MCF 10A (cell line): ENCODE measurements at regions of chr2 and their contacts with region 1.

Region 1: DNA sequence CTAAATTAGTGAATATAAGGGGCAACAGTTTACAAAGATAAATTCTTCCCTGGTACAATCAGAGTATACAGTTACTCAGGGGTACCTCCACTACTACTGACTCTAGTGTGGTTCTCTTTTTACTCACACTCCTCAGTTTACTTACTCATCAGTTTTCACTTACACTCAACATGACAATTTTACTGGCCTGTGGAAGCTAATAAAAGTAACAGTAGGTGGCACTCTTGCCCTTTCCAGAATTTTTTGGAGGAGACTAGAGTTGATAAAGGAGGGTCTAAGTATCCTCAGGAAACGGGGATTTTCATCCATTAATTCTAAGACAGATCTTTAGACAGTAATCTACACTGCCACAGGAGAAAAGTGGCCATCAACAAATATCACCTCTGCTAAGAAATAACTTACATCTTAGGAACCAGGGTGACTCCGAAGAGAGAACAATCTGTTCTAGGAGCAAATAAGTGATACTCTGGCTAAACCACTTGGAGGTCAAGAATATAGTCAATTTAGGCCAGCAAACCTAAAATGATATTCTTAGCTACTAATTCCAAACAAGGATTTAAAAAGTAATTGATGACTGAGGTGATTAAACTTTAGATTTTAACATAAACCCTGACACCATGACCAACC is 61.3 kb downstream of the ATL2 start:
- DNase-seq: peak; percentile 63
- H3K4me3 Mint-ChIP-seq: no peak overlapping the region
- H3K27ac Mint-ChIP-seq: no peak overlapping the region
- H3K4me1 Mint-ChIP-seq: no peaks in the 10 kb centered on the region
- H3K27me3 Mint-ChIP-seq: no peaks in the 10 kb centered on the region
- CTCF ChIP-seq: peak; percentile 75

Region 2: DNA sequence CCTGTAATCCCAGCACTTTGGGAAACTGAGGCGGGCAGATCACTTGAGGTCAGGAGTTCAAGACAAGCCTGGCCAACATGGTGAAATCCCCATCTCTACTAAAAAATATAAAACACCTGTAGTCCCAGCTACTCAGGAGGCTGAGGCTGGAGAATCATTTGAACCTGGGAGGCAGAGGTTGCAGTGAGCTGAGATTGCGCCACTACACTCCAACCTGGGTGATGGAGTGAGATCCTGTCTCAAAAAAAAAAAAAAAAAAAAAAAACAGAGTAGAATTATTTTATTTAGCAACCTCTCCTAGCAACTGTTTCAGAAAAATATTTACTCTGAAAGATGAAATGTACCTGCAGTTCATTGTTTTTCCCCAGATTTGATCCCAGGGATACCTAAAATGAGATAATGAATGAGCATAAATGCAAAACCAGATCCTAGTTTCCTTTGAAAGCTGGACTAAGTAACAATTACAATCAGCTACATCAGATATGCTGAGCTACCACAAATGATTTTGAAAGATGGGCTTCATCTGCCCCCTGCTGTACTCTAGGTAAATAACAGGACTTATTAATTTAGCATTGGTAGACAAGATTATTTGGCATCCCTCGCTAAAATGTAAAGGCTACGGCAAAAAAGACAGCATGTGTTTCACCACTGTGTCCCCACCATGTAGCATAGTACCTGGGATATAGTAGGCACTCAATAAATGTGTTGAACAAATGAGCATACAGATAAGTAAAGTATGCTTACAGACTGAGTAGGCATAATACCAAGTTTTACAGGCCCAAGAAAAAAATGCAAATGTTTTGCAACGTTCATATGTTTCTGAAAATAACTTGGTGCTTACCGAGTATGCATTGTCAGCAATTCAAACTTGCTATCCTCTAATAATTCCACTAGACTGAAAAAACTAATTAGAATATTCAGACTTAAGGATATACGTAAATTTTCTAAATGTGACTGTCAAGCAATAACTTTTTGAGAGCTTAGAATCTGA is 41.2 kb before region 1 on chr2:
- CTCF ChIA-PET with region 1: no interaction called
- POLR2A ChIA-PET with region 1: no interaction called
- intact Hi-C with region 1: no loop called
- DNase-seq: peak; percentile 84
- H3K4me3 Mint-ChIP-seq: no peak overlapping the region
- H3K27ac Mint-ChIP-seq: no peak overlapping the region
- H3K4me1 Mint-ChIP-seq: peaks cover 8% of the 10 kb centered on the region
- H3K27me3 Mint-ChIP-seq: no peaks in the 10 kb centered on the region
- CTCF ChIP-seq: peak; percentile 78

Region 3: GRCh38 chr2:38465789-38466127 is 149.9 kb after region 1 on chr2:
- CTCF ChIA-PET with region 1: interaction called, 16 read pairs
- POLR2A ChIA-PET with region 1: interaction called, 3 read pairs
- intact Hi-C with region 1: loop called (anchors 2 kb)
- DNase-seq: peak; percentile 64
- H3K4me3 Mint-ChIP-seq: no peak overlapping the region
- H3K27ac Mint-ChIP-seq: peak overlapping the region; percentile 70
- H3K4me1 Mint-ChIP-seq: peaks cover 24% of the 10 kb centered on the region
- H3K27me3 Mint-ChIP-seq: no peaks in the 10 kb centered on the region
- CTCF ChIP-seq: peak; percentile 31

Region 4: DNA sequence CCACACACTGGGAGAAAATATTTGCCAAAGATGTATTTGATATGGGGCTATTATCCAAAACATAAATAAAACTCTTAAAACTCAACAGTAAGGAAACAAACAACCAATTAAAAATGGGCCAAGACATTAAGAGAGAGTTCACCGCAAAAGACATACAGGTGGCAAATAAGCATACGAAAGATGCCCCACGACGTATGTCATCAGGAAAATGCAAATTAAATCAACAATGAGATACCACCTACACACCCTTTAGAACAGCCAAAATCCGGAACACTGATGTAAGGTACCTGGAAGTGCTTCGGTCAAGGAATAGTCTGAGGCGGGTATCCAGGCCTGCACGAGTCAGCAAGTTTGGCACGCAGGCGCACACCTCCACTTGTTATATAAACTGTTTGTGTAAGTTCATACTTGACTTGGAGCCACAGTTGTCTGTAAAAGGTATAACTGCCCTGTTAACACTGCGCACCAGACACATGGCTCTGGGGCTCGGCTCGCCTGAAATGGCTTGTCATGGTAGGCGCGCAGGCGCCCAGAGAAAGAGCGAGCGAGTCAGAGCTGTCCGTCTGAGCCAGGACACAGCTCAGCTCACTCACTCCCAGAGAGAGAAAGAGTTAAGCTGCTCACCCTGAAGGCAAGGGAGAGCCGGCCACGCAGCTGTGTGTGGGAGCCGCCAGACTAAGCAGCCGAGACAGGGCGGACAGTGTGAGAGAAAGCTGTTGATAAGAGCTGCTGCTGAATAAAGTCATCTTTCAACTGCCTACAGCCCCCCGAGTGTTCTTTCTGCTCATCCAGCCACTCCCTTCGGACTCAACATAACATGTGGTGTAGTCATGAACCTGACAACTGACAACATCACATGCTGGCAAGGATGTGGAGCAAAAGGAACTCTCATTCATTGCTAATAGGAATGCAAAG is 199.6 kb after region 1 on chr2:
- CTCF ChIA-PET with region 1: interaction called, 78 read pairs
- POLR2A ChIA-PET with region 1: interaction called, 4 read pairs
- intact Hi-C with region 1: no loop called
- DNase-seq: peak; percentile 89
- H3K4me3 Mint-ChIP-seq: peak overlapping the region; percentile 75
- H3K27ac Mint-ChIP-seq: peak overlapping the region; percentile 94
- H3K4me1 Mint-ChIP-seq: peaks cover 20% of the 10 kb centered on the region
- H3K27me3 Mint-ChIP-seq: no peaks in the 10 kb centered on the region
- CTCF ChIP-seq: no peak

Region 5: DNA sequence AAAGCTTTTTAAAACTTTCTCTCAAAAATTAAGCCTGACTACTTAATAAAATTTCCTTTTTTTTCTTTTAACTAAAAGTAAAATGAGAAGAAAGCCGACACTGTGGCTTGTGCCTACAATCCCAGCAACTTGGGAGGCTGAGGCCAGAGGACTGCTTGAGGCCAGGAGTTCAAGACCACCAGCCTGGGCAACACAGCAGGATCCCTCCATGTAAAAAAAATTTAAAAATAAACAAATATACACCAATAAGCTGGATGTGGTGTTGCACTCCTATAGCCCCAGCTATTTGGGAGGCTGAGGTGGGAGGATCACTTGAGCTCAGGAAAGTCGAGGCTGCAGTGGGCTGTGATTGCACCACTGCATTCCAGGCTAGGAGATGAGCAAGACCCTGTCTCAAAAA is 249.5 kb after region 1 on chr2:
- CTCF ChIA-PET with region 1: interaction called, 11 read pairs
- POLR2A ChIA-PET with region 1: no interaction called
- intact Hi-C with region 1: no loop called
- DNase-seq: no peak
- H3K4me3 Mint-ChIP-seq: no peak overlapping the region
- H3K27ac Mint-ChIP-seq: no peak overlapping the region
- H3K4me1 Mint-ChIP-seq: no peaks in the 10 kb centered on the region
- H3K27me3 Mint-ChIP-seq: no peaks in the 10 kb centered on the region
- CTCF ChIP-seq: no peak

Region 6: DNA sequence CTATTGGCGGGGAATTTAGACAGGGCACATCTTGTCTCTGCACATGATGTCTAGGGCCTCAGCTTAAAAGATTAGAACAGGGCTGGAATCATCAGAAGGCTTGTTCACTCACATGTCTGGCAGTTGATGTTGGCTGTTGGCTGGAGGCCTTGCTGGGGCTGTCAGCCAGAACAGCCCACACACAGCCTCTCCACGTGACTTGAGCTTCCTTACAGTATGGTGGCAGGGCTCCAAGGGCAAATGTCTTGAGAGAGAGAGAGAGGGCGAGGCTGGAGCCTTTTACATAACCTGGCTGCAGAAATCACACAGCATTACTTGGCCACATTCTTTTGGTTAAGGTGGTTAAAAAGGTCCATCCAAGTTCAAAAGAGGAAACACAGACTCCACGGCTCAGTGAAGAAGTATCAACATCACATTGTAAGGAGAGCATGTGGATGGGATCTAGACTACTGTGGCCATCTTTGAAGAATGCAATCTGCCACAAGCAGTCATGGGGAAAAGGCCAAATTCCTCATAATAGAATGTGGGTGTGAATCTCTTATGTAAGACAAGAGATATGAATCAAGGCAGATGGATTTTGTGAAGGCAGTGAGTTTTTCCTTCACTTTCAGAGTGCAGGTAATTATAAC is 404.9 kb after region 1 on chr2:
- CTCF ChIA-PET with region 1: interaction called, 6 read pairs
- POLR2A ChIA-PET with region 1: interaction called, 4 read pairs
- intact Hi-C with region 1: loop called (anchors 5 kb)
- DNase-seq: peak; percentile 97
- H3K4me3 Mint-ChIP-seq: no peak overlapping the region
- H3K27ac Mint-ChIP-seq: peak overlapping the region; percentile 36
- H3K4me1 Mint-ChIP-seq: peaks cover 19% of the 10 kb centered on the region
- H3K27me3 Mint-ChIP-seq: no peaks in the 10 kb centered on the region
- CTCF ChIP-seq: no peak